ENCODE measurements at regions of chr15 and their contacts with region 1.

Region 1: DNA sequence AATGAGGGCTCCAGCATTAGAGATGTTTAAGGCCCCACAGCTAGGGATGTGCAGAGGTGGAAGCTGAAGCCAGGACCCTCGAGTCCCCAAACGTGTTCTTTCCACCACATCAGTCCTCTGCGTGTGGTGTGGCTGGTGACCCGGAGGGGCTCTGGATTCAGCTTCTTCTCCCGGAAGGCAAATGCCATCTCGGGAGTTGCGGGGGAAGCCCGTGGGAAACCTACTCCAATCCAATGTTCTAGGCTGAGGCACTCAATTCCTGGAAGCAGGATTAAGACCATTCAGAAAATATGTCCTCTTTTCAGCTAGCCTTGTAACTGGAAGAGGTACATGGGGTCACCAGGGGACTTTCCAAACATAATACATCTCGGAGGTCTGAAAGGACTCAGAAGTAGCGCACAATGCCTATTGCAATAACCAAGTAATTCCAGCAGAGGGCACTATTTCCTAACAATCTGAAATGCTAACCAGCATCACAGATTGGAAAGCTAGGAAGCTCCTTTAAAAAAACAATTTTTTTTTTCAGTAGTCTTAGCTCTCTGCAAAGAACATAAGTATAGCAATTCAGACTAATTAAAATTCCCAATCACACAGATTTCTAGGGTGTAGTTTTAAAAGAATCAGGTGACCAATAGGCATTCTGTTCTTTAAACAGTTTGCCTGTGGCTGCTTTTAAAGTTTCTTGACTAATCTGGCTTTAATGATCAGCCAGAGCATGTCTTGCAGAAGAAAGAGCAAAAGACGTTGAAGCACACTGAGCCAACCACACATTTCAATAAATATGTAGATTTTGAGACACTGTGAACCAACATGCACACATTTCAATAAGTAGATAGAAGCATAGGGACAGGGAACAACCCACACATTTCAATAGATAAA is 36.1 kb downstream of the BNC1 start:
- H3K4me3 Mint-ChIP-seq: no peak overlapping the region
- H3K27ac Mint-ChIP-seq: no peak overlapping the region
- H3K4me1 Mint-ChIP-seq: no peaks in the 10 kb centered on the region
- H3K27me3 Mint-ChIP-seq: peaks cover 32% of the 10 kb centered on the region

Region 2: GRCh38 chr15:83436458-83437158 is 188.2 kb after region 1 on chr15:
- intact Hi-C with region 1: loop called (anchors 1 kb)
- H3K4me3 Mint-ChIP-seq: no peak overlapping the region
- H3K27ac Mint-ChIP-seq: no peak overlapping the region
- H3K4me1 Mint-ChIP-seq: peaks cover 2% of the 10 kb centered on the region
- H3K27me3 Mint-ChIP-seq: peaks cover 16% of the 10 kb centered on the region